ENCODE measurements at regions of chr4 and their contacts with region 1.

Region 1: DNA sequence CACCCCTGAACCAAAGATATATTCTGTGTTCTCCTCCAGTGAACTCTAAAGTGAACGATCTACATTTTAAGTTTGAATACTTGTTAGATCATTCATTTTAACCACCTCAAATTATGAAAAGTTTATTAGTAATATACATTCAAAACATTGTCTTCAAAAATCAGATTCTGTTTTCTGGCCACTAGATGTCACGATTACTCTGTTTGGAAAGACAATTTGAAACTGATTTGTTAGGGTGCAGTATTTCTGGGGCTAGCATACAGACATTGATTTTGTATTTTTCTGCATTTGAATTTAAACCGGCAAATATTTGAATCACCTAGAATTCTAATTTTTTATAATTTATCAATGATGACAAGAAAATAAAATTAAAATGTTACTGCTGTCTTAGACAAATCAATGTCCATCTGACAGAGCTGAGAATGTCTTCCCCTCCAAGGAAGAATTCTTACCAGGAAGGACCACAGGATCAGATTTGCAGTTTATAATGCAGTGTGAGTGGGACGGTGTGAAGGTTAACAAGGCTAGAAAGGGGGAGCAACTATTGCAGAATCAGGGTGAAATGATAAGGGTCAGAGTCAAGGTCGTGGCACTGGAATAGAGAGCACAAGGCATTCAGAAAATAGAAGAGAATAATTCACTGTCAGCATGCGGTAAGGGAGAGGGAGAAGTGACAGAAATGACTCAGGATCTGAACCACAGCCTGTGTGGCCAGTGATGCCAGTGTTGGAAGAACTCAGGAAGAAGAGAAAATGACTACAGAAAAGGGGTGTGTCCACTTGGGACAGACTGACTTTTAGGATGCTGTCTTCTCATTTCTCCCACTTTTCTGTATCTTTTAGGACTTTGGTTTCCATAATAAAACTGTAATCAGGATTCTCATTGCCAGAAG is 91.6 kb downstream of the ANXA10 start:
- DNase-seq: no peak
- H3K4me3 Mint-ChIP-seq: no peak overlapping the region
- H3K27ac Mint-ChIP-seq: no peak overlapping the region
- H3K4me1 Mint-ChIP-seq: no peaks in the 10 kb centered on the region
- H3K27me3 Mint-ChIP-seq: no peaks in the 10 kb centered on the region

Region 2: GRCh38 chr4:168551945-168552695 is 368.2 kb after region 1 on chr4:
- CTCF ChIA-PET with region 1: no interaction called
- intact Hi-C with region 1: loop called (anchors 1 kb)
- DNase-seq: peak; percentile 18
- H3K4me3 Mint-ChIP-seq: no peak overlapping the region
- H3K27ac Mint-ChIP-seq: no peak overlapping the region
- H3K4me1 Mint-ChIP-seq: peaks cover 4% of the 10 kb centered on the region
- H3K27me3 Mint-ChIP-seq: no peaks in the 10 kb centered on the region

Region 3: DNA sequence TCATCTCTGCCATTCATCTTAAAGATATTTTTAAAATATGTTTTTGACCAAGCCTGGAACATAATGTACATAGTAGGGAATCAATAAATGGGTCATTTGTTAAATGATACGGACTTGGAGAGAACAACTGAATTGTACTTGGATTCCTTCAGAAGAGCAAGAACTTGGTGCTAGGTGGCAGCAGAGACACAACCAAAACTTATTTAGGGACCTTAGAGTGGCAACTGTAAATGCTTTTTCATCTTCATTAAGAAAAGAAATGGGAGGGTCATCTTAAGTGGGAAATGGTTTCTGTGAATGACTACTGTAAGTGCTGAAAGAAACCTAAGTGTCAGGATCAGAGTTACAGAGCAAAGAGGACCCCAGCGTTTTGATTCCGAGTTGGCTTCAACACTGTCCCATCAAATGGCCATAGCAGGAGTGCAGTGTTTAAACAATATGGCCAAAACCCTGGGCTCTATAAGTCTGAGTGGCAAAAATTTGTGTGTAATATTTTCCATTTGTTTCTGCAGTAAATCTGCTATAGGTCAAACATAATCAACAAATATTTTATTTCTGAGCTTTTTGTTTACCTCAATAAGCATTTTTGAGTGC is 526.5 kb after region 1 on chr4:
- CTCF ChIA-PET with region 1: no interaction called
- intact Hi-C with region 1: loop called (anchors 10 kb)
- DNase-seq: peak; percentile 35
- H3K4me3 Mint-ChIP-seq: no peak overlapping the region
- H3K27ac Mint-ChIP-seq: no peak overlapping the region
- H3K4me1 Mint-ChIP-seq: peaks cover 10% of the 10 kb centered on the region
- H3K27me3 Mint-ChIP-seq: no peaks in the 10 kb centered on the region

Region 4: DNA sequence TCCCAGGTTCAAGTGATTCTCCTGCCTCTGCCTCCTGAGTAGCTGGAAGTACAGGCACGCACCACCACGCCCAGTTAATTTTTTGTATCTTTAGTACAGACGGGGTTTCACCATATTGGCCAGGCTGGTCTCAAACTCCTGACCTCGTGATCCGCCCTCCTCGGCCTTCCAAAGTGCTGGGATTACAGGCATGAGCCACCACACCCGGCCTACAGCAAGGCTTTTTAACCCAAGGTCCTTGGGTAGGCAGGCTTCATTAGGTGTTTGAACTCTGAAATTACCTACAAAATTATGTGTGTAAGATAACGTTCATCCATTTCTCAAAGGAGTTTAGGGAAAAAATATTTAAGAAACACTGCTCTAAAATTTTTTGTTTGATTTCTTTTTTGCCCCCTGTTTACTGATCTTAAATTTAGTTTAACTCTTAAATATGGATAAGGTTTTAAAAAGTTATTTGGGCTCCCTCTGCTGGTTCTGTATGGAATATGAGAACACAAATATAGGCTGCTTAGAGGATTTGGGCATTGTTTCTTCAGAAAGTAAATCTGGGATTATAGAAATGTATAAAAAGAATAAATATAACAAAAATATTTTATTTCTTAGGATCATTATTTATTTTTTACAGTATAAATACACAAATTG is 733.3 kb after region 1 on chr4:
- CTCF ChIA-PET with region 1: interaction called, 3 read pairs
- intact Hi-C with region 1: loop called (anchors 1 kb)
- DNase-seq: no peak
- H3K4me3 Mint-ChIP-seq: no peak overlapping the region
- H3K27ac Mint-ChIP-seq: no peak overlapping the region
- H3K4me1 Mint-ChIP-seq: no peaks in the 10 kb centered on the region
- H3K27me3 Mint-ChIP-seq: no peaks in the 10 kb centered on the region

Region 5: DNA sequence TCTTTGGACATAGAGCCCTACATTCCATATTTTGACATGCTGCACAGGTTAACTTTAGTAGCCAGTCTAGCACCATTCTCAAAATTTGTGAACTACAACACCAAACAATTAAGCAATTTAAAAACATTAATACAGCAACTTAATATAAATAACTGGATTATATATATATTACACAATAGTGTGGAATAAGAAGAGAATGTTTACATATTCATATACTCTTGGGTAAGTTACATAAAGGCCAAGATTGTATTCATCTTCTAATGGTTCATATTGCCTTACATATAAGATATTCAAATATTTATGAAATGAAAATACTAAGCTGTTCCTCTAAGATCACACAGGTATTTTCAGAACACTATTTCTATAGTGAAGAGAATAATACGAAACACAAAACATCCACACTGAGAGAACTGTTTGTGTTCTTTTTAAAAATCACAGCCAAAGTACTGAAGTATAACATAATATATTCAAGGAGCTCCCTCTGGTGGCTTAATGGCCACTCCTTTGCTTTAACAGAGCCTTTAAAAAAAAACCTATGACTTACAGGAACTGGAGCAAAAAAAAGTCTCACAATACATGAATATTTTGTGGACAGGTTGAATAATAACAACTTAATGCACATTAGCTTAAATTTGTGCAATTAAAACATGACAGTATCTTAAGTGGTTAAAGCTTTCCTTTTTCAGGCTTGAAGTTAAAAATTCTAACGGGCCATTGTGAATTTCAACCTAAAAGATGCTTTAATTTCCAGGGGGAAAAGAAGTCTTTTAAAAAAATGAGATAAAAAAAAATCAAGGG is 1382.3 kb after region 1 on chr4:
- CTCF ChIA-PET with region 1: no interaction called
- intact Hi-C with region 1: loop called (anchors 10 kb)
- DNase-seq: peak; percentile 47
- H3K4me3 Mint-ChIP-seq: no peak overlapping the region
- H3K27ac Mint-ChIP-seq: no peak overlapping the region
- H3K4me1 Mint-ChIP-seq: peaks cover 7% of the 10 kb centered on the region
- H3K27me3 Mint-ChIP-seq: no peaks in the 10 kb centered on the region

Measured in activated naive CD4-positive, alpha-beta T cell treated with anti-CD3 and anti-CD28 coated beads for 36 hours (primary cell).